Activated T-helper 2 cell treated with anti-CD3 and anti-CD28 coated beads, Interferon-gamma antibody, Interleukin-2, Interleukin-4, amounts not matched to agents 10 μg/mL and 5 μg/mL and 100 μg/mL, durations not matched to agents 14 hours and 24 hours and 36 hours (primary cell): ENCODE measurements at regions of chr4 and their contacts with region 1.

Region 1: GRCh38 chr4:7857238-7857701 is 82.4 kb downstream of the AFAP1 start:
- DNase-seq: no peak
- H3K4me3 Mint-ChIP-seq: peak overlapping the region; percentile 76
- H3K27ac Mint-ChIP-seq: peak overlapping the region; percentile 85
- H3K4me1 Mint-ChIP-seq: peaks cover 61% of the 10 kb centered on the region
- H3K27me3 Mint-ChIP-seq: no peaks in the 10 kb centered on the region

Region 2: GRCh38 chr4:7761720-7762119 is 95.5 kb before region 1 on chr4:
- intact Hi-C with region 1: loop called (anchors 5 kb)
- DNase-seq: peak; percentile 39
- H3K4me3 Mint-ChIP-seq: no peak overlapping the region
- H3K27ac Mint-ChIP-seq: peak overlapping the region; percentile 22
- H3K4me1 Mint-ChIP-seq: peaks cover 25% of the 10 kb centered on the region
- H3K27me3 Mint-ChIP-seq: no peaks in the 10 kb centered on the region

Region 3: GRCh38 chr4:7827991-7828720 is 29.1 kb before region 1 on chr4:
- intact Hi-C with region 1: loop called (anchors 1 kb)
- DNase-seq: peak; percentile 19
- H3K4me3 Mint-ChIP-seq: peak overlapping the region; percentile 4
- H3K27ac Mint-ChIP-seq: peak overlapping the region; percentile 67
- H3K4me1 Mint-ChIP-seq: peaks cover 58% of the 10 kb centered on the region
- H3K27me3 Mint-ChIP-seq: no peaks in the 10 kb centered on the region

Region 4: GRCh38 chr4:7894677-7895181 is 37.5 kb after region 1 on chr4:
- intact Hi-C with region 1: no loop called
- DNase-seq: no peak
- H3K4me3 Mint-ChIP-seq: no peak overlapping the region
- H3K27ac Mint-ChIP-seq: no peak overlapping the region
- H3K4me1 Mint-ChIP-seq: peaks cover 4% of the 10 kb centered on the region
- H3K27me3 Mint-ChIP-seq: no peaks in the 10 kb centered on the region

Region 5: DNA sequence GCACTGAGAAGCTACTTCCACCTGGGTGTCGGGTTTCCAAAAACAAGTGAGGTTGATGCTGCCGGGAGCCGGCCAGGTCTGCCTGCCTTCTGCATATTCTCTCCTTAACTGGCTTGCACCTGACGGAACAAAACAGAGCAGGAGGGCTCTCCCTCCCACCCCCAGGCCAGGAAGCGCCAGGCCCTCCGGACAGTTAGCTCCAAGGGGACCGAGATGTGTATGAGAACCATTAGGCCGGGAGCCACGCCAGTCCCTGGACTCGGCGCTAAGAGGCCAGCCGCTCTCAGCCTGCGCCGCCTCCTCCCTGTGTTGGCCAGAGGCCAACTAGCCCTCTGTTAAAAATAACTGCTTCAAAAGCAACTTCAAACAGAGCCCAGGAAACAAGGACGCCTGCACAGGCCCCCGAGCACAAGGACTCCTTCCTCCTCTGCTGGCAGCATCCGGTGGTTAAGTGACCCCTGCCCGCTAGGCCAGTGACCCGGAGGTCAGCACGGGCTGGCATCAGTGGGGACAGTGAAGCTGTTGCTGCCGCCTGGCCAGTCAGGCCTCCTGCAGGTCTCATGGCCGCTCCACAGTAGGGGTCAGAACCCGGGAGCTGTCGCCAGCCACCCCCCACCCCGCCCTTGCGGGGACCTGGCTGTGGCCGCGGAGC is 193.4 kb after region 1 on chr4:
- intact Hi-C with region 1: no loop called
- DNase-seq: no peak
- H3K4me3 Mint-ChIP-seq: no peak overlapping the region
- H3K27ac Mint-ChIP-seq: no peak overlapping the region
- H3K4me1 Mint-ChIP-seq: no peaks in the 10 kb centered on the region
- H3K27me3 Mint-ChIP-seq: peaks cover 3% of the 10 kb centered on the region